PC-3 (cell line): ENCODE measurements at regions of chr11 and their contacts with region 1.

Region 1: DNA sequence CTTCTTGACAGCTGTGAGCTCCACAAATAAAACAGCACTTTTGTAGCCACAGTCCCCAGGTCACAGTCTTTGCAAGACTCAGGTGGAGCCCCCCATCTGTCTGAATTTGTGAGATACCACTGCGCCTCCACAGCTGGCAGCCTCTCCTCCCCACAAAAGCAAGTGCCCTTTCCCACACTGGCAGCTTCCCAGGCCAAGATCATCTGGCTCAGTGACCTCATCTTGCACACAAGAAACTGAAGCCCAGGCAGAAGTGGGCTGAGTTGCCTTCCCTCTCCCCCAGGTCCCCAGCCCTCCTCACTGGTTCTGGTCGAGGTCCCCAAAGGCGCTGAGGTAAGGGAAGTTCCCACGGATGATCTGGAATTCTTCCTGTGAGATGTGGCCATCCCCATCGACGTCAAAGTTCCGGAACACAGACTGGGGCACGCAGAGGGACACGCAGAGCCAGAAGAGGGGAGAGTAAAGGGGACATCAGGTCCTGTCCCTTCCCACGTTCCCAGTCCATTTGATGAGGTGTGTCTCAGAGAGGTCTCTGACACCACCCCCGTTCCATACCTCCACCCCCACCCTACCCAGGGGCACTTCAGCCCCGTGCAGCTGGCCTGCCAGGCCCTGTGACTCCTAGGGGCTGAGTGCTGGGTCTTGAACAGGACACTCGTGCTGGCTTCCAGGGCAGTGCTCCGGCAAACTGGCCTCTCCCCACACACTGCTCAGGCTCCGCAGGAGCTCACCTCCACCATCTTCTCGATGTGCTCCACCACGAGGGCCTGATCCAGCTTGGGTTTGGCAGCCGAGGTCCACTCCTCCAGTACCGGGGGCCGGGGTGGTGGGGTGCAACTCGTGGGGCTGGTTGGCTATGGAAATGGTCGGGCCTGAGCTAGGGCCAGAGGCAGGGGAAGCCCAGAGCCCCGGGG is 8.9 kb downstream of the RASGRP2 start:
- DNase-seq: no peak
- ATAC-seq: no peak
- H3K4me3 ChIP-seq: no peak overlapping the region
- H3K27ac ChIP-seq: no peak overlapping the region
- H3K4me1 ChIP-seq: no peaks in the 10 kb centered on the region
- H3K27me3 ChIP-seq: peaks cover 2% of the 10 kb centered on the region; the same call in 1 of the 2 replicates
- CTCF ChIP-seq: no peak

Region 2: DNA sequence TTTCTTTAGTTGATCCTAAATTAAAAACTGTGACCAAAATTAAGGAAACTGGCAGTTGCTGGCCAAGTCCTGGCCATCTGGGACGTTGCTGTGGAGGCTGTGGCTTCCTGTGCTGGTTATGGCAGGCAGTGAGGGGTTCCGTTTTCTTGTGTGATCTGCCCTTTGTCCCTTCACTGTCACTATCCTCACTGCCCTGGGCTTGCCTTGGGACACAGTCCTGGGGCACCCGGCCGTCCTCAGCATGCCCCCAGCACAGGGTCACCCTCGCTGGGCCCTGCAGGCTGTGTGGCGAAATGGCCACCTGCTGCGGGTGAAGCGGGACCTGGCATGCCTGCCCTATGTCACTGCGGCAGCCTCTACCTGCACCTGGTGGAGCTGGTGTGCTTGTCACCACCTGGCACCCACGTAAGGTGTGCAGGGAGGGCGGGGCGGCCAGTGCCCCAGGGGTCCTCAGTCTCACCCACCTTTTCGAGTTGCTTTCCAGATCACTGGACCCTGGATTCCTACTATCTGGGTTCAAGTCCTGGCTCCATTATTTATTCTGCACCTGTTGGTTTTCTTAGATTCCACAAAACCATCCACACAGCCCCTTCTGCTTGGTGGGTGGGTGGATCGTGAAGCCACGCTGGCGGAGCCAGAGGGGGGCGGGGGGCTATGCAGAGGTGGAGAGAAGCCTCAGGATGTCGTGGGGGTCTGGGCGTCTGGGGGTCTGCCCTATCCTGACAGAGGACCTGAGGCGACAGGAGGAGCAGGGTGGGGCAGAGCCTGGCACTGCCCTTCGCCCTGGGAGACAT is 196.4 kb before region 1 on chr11:
- CTCF ChIA-PET with region 1: no interaction called
- POLR2A ChIA-PET with region 1: no interaction called
- intact Hi-C with region 1: no loop called
- DNase-seq: no peak
- ATAC-seq: no peak
- H3K4me3 ChIP-seq: no peak overlapping the region
- H3K27ac ChIP-seq: no peak overlapping the region
- H3K4me1 ChIP-seq: peaks cover 3% of the 10 kb centered on the region; the same call in 1 of the 2 replicates
- H3K27me3 ChIP-seq: peaks cover 25% of the 10 kb centered on the region; the same call in 1 of the 2 replicates
- CTCF ChIP-seq: no peak

Region 3: DNA sequence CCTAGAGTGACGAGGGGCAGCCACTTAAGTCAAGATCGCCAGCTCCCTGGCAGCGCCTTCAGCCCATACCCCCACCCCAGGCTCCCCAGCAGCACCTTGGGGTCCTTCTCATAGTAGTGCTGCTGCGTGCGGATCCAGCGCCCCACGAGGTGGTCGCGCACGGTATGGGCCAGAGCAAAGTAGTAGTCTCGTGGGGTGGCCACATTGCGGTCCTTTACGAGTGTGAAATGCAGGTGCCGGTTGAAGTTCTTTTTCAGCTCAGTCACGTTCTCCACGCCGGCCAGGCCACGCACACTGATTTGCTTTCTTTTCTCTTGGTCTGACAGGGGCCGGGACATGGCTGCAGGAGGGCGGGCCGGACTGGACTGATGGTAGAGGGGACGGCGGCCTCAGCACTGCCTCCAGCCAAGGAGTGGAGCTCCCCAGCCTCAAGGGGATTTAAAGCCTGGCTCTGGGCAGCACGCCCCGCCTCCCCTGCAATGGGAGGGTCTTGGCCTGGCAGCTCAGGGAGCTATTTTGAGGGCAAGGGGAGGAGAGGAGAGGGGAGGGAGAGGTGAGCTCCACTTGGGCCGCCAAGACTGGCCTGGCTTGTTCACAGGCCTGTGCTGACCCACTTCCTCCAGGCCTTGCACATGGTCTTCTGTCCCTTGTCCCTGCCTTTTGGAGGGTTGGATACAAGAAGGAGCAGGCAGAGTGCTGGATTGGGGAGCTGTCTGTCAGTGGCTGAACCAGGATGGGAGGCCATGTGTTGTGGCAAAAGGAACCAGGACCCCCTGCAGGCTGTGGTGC is 24.7 kb after region 1 on chr11 and contains the start of gene PYGM:
- CTCF ChIA-PET with region 1: interaction called, 11 read pairs
- POLR2A ChIA-PET with region 1: no interaction called
- intact Hi-C with region 1: no loop called
- DNase-seq: peak; percentile 27
- ATAC-seq: peak; percentile 17
- H3K4me3 ChIP-seq: no peak within 1 kb of the TSS
- H3K27ac ChIP-seq: no peak within 1 kb of the TSS
- H3K4me1 ChIP-seq: no peaks in the 10 kb centered on the region
- H3K27me3 ChIP-seq: no peaks in the 10 kb centered on the region
- CTCF ChIP-seq: no peak
- total RNA-seq, gene PYGM: 0.95 and 1.3 TPM in 2 replicates